ENCODE measurements at regions of chr6 and their contacts with region 1.

Region 1: GRCh38 chr6:42440778-42441696 is 10.7 kb downstream of the TRERF1 start:
- DNase-seq: no peak
- ATAC-seq: peak; percentile 14
- H3K4me3 Mint-ChIP-seq: peak overlapping the region; percentile 67
- H3K27ac Mint-ChIP-seq: peak overlapping the region; percentile 98
- H3K4me1 Mint-ChIP-seq: peaks cover 82% of the 10 kb centered on the region
- H3K27me3 Mint-ChIP-seq: no peaks in the 10 kb centered on the region
- CTCF ChIP-seq: no peak

Region 2: GRCh38 chr6:41413250-41413649 is 1027.8 kb before region 1 on chr6:
- CTCF ChIA-PET with region 1: no interaction called
- POLR2A ChIA-PET with region 1: no interaction called
- DNase-seq: no peak
- ATAC-seq: no peak
- H3K4me3 Mint-ChIP-seq: no peak overlapping the region
- H3K27ac Mint-ChIP-seq: no peak overlapping the region
- H3K4me1 Mint-ChIP-seq: peaks cover 32% of the 10 kb centered on the region
- H3K27me3 Mint-ChIP-seq: peaks cover 100% of the 10 kb centered on the region
- CTCF ChIP-seq: no peak

Region 3: DNA sequence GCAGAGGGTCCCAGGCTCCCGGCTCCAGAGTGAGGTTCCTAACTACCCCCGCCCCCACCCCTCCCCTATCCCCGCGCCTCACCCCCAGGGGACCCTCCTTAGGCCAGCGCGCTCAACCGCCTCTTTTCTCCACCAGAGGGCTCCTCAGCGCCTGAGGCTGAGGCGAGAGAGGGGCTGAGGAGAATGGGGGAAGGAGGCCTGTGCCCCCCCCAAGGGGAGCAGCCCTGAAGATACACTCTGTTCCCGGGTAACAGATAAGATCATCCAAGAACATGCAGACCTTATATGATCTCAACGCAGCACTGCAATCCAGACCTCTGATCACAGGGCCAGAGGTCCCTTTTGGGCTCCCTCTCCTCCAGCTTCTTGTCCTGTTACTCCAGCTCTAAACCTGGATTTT is 180.1 kb before region 1 on chr6:
- CTCF ChIA-PET with region 1: interaction called, 10 read pairs
- POLR2A ChIA-PET with region 1: no interaction called
- DNase-seq: peak; percentile 79
- ATAC-seq: peak; percentile 71
- H3K4me3 Mint-ChIP-seq: no peak overlapping the region
- H3K27ac Mint-ChIP-seq: no peak overlapping the region
- H3K4me1 Mint-ChIP-seq: peaks cover 43% of the 10 kb centered on the region
- H3K27me3 Mint-ChIP-seq: no peaks in the 10 kb centered on the region
- CTCF ChIP-seq: peak; percentile 46

Region 4: GRCh38 chr6:42417641-42418112 is 23.4 kb before region 1 on chr6:
- CTCF ChIA-PET with region 1: interaction called, 34 read pairs
- POLR2A ChIA-PET with region 1: no interaction called
- DNase-seq: no peak
- ATAC-seq: no peak
- H3K4me3 Mint-ChIP-seq: no peak overlapping the region
- H3K27ac Mint-ChIP-seq: no peak overlapping the region
- H3K4me1 Mint-ChIP-seq: peaks cover 63% of the 10 kb centered on the region
- H3K27me3 Mint-ChIP-seq: no peaks in the 10 kb centered on the region
- CTCF ChIP-seq: no peak

Region 5: GRCh38 chr6:42429850-42430214 is 11.2 kb before region 1 on chr6:
- CTCF ChIA-PET with region 1: interaction called, 15 read pairs
- POLR2A ChIA-PET with region 1: interaction called, 6 read pairs
- DNase-seq: no peak
- ATAC-seq: no peak
- H3K4me3 Mint-ChIP-seq: no peak overlapping the region
- H3K27ac Mint-ChIP-seq: no peak overlapping the region
- H3K4me1 Mint-ChIP-seq: peaks cover 49% of the 10 kb centered on the region
- H3K27me3 Mint-ChIP-seq: no peaks in the 10 kb centered on the region
- CTCF ChIP-seq: no peak

Region 6: DNA sequence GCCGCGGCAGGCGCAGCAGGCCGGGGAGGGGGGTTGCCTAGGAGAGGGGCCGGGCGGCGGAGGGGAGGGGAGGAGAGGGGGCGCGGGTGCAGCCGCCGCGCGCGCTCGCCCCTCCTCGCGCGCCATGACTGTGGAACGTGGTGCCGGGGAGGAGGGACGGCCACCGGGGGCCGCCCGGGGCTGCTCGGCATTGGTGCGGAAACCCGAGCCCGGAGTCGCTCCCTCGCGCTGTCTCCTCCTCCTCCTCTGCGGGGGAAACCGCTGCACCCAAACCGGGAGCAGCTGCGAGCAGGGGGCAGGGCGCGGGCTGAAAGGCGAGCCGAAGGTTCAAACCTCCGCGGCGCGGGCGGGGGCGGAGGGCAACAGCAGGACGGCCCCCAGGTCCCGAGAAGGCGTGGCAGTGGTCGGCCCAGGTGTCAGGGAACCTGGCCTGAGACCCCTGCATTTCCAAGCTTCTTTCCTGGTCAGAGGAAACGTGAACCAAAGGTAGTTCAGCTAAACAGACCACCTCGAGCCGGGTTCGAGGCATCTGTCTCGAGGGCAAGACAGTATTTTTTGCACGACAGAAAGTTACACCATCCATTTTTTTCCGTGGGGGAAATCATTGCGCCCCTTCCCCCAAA is 12.1 kb after region 1 on chr6:
- CTCF ChIA-PET with region 1: interaction called, 24 read pairs
- POLR2A ChIA-PET with region 1: interaction called, 26 read pairs
- DNase-seq: peak; percentile 92
- ATAC-seq: peak; percentile 66
- H3K4me3 Mint-ChIP-seq: peak overlapping the region; percentile 100
- H3K27ac Mint-ChIP-seq: peak overlapping the region; percentile 84
- H3K4me1 Mint-ChIP-seq: peaks cover 43% of the 10 kb centered on the region
- H3K27me3 Mint-ChIP-seq: peaks cover 4% of the 10 kb centered on the region
- CTCF ChIP-seq: no peak

Measured in WTC11 (cell line).